Mammary epithelial cell (primary cell): ENCODE measurements at regions of chr12 and their contacts with region 1.

Region 1: GRCh38 chr12:38282886-38283285 is 33.7 kb upstream of the ALG10B start:
- DNase-seq: peak; percentile 96
- H3K4me3 ChIP-seq: no peak overlapping the region
- H3K27ac ChIP-seq: peak overlapping the region; percentile 95
- H3K4me1 ChIP-seq: peaks cover 24% of the 10 kb centered on the region
- H3K27me3 ChIP-seq: no peaks in the 10 kb centered on the region
- CTCF ChIP-seq: no peak

Region 2: GRCh38 chr12:38138225-38139221 is 144.4 kb before region 1 on chr12:
- CTCF ChIA-PET with region 1: no interaction called
- dilution Hi-C with region 1: no loop called
- in situ Hi-C with region 1: no loop called
- intact Hi-C with region 1: loop called (anchors 10 kb)
- DNase-seq: peak; percentile 64
- H3K4me3 ChIP-seq: peak overlapping the region; percentile 61 to 87 (median 78)
- H3K27ac ChIP-seq: peak overlapping the region; percentile 52
- H3K4me1 ChIP-seq: no peaks in the 10 kb centered on the region
- H3K27me3 ChIP-seq: no peaks in the 10 kb centered on the region
- CTCF ChIP-seq: peak; percentile 89 to 98

Region 3: GRCh38 chr12:38175538-38175937 is 107.3 kb before region 1 on chr12:
- CTCF ChIA-PET with region 1: no interaction called
- dilution Hi-C with region 1: no loop called
- in situ Hi-C with region 1: loop called in 1 of 2 experiments (anchors 25 kb)
- intact Hi-C with region 1: no loop called
- DNase-seq: peak; percentile 77
- H3K4me3 ChIP-seq: no peak overlapping the region
- H3K27ac ChIP-seq: peak overlapping the region; percentile 22
- H3K4me1 ChIP-seq: peaks cover 12% of the 10 kb centered on the region
- H3K27me3 ChIP-seq: no peaks in the 10 kb centered on the region
- CTCF ChIP-seq: no peak